HCT116 (cell line): ENCODE measurements at regions of chr1 and their contacts with region 1.

Region 1: GRCh38 chr1:64675718-64676345 is 69.0 kb upstream of the RAVER2 start:
- DNase-seq: no peak
- ATAC-seq: peak; percentile 53; the same call in 1 of the 2 replicates
- H3K4me3 ChIP-seq: no peak overlapping the region
- H3K27ac ChIP-seq: no peak overlapping the region
- H3K4me1 ChIP-seq: no peaks in the 10 kb centered on the region
- H3K27me3 ChIP-seq: no peaks in the 10 kb centered on the region
- CTCF ChIP-seq: peak; percentile 26 to 66 (median 55); a peak in 5 of 6 replicates
- POLR2A ChIP-seq: no peak
- RAD21 ChIP-seq: 0 out of 2 replicates have a peak, but pooled peaks have one; percentile 32

Region 2: DNA sequence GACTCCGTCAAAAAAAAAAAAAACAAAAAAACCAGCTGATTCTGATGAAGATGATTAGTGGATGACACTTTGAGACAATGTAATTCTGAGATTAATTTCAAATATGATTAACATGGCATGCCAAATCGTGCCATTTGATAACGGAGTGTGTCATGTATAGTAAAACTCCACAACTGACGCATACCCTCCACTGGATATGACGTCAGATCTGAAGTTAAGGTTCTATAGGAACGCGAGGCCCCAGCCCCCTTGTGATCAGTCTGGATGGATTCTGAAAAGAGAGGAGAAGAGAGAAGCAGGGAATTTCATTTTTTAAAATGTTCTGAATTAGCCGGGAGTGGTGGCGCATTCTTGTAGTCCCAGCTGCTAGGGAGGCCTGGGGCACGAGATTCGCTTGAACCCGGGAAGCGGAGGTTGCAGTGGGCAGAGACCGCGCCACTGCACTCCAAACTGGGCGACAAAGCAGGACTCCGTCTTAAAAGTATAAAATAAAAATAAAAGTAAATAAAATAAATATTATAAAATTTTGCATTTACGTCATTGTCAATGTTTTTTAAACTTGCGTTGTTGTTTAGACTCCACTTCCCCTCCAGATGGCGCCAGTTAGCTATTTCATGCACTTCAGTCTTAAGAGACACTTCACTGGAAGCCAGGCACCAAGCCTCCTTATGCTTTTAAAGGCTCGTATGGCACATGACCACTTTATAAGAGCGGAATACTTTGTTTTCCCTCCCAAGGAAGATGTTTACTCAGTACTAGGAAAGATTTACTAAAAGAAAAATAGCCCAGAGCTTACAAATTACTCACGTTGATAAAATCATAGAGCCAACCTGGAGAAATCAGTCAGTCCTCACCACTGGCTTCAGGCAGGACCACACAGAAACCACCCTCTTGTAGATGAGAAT is 406.9 kb before region 1 on chr1:
- CTCF ChIA-PET with region 1: interaction called, 5 read pairs
- POLR2A ChIA-PET with region 1: no interaction called
- RAD21 ChIA-PET with region 1: no interaction called
- intact Hi-C with region 1: loop called (anchors 2 kb)
- DNase-seq: peak; percentile 80
- ATAC-seq: peak; percentile 87
- H3K4me3 ChIP-seq: no peak overlapping the region
- H3K27ac ChIP-seq: no peak overlapping the region
- H3K4me1 ChIP-seq: peaks cover 0 to 2% of the 10 kb centered on the region in 2 experiments; a peak in 2 of 4 replicates
- H3K27me3 ChIP-seq: no peaks in the 10 kb centered on the region
- CTCF ChIP-seq: peak; percentile 54 to 80 (median 63)
- POLR2A ChIP-seq: no peak
- RAD21 ChIP-seq: peak; percentile 94

Region 3: GRCh38 chr1:64663668-64664067 is 12.2 kb before region 1 on chr1:
- CTCF ChIA-PET with region 1: interaction called, 15 read pairs
- POLR2A ChIA-PET with region 1: no interaction called
- RAD21 ChIA-PET with region 1: no interaction called
- intact Hi-C with region 1: no loop called
- DNase-seq: no peak
- ATAC-seq: peak; percentile 74
- H3K4me3 ChIP-seq: no peak overlapping the region
- H3K27ac ChIP-seq: no peak overlapping the region
- H3K4me1 ChIP-seq: no peaks in the 10 kb centered on the region
- H3K27me3 ChIP-seq: no peaks in the 10 kb centered on the region
- CTCF ChIP-seq: peak in 2 of 3 experiments; percentile 45 to 56; a peak in 4 of 6 replicates
- POLR2A ChIP-seq: no peak
- RAD21 ChIP-seq: peak; percentile 27; the same call in 1 of the 2 replicates

Region 4: DNA sequence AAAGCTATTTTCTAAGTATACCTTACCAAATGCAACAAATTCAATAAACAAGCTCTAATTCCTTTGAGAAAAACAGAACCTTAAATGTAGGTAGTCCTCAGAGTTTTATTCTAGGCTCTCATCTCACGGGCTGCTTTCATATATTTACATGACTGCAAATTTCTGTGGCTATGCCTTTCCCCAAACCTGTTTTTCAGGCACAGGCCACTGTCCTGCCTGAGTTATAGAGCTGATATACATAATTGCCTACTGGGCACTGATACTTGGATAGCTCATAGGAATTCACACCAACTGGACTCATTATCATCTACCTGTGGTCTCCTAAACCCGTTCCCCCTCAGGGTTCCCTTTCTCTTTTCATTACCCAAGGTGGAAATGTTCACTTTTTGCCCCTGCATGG is 48.0 kb after region 1 on chr1:
- CTCF ChIA-PET with region 1: no interaction called
- POLR2A ChIA-PET with region 1: no interaction called
- RAD21 ChIA-PET with region 1: no interaction called
- intact Hi-C with region 1: no loop called
- DNase-seq: no peak
- ATAC-seq: no peak
- H3K4me3 ChIP-seq: no peak overlapping the region
- H3K27ac ChIP-seq: no peak overlapping the region
- H3K4me1 ChIP-seq: no peaks in the 10 kb centered on the region
- H3K27me3 ChIP-seq: no peaks in the 10 kb centered on the region
- CTCF ChIP-seq: no peak
- POLR2A ChIP-seq: no peak
- RAD21 ChIP-seq: no peak